GM12878 (cell line): ENCODE measurements at regions of chr14 and their contacts with region 1.

Region 1: DNA sequence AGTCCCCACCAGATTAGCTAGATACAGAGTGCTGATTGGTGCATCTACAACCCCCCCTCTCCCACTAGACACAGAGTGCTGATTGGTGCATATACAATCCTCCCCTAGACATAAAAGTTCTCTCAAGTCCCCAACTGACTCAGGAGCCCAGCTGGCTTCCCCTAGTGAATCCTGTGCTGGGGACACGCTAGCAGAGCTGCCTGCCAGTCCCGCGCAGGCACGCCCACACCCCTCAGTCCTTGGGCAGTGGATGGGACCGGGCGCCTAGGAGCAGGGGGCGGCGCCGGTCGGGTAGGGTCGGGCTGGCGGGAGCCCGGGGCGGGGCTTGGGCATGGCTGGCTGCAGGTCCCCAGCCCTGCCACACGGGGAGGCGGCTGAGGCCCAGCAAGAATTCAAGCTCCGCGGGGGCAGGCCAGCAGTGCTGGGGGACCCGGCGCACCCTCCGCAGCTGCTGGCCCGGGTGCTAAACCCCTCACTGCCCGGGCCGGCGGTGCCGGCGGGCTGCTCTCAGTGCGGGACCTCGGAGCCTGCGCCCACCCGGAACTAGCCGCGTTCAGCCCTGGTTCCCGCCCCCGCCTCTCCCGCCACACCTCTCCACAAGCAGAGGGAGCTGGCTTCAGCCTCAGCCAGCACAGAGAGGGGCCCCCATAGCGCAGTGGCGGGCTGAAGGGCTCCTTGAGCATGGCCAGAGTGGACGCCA is 64.3 kb upstream of the DDHD1 start:
- DNase-seq: peak; percentile 28
- ATAC-seq: peak; percentile 99
- H3K4me3 ChIP-seq: peak overlapping the region; percentile 51
- H3K27ac ChIP-seq: peak overlapping the region; percentile 15; the same call in 1 of the 2 replicates
- H3K4me1 ChIP-seq: peaks cover 3% of the 10 kb centered on the region; the same call in 1 of the 2 replicates
- H3K27me3 ChIP-seq: no peaks in the 10 kb centered on the region
- CTCF ChIP-seq: peak; percentile 40 to 66 (median 45); a peak in 5 of 6 replicates
- EP300 ChIP-seq: no peak
- POLR2A ChIP-seq: peak; percentile 72
- RAD21 ChIP-seq: no peak

Region 2: GRCh38 chr14:53042480-53042879 is 175.0 kb before region 1 on chr14:
- CTCF ChIA-PET with region 1: no interaction called
- POLR2A ChIA-PET with region 1: no interaction called
- RAD21 ChIA-PET with region 1: no interaction called
- SMC1A ChIA-PET with region 1: no interaction called
- in situ Hi-C with region 1: no loop called
- intact Hi-C with region 1: no loop called
- DNase-seq: no peak
- ATAC-seq: no peak
- H3K4me3 ChIP-seq: no peak overlapping the region
- H3K27ac ChIP-seq: no peak overlapping the region
- H3K4me1 ChIP-seq: no peaks in the 10 kb centered on the region
- H3K27me3 ChIP-seq: no peaks in the 10 kb centered on the region
- CTCF ChIP-seq: no peak
- EP300 ChIP-seq: no peak
- POLR2A ChIP-seq: no peak
- RAD21 ChIP-seq: no peak

Region 3: GRCh38 chr14:53190938-53191337 is 26.5 kb before region 1 on chr14:
- CTCF ChIA-PET with region 1: no interaction called
- POLR2A ChIA-PET with region 1: interaction called, 4 read pairs
- RAD21 ChIA-PET with region 1: interaction called, 10 read pairs
- SMC1A ChIA-PET with region 1: interaction called, 4 read pairs
- in situ Hi-C with region 1: no loop called
- intact Hi-C with region 1: no loop called
- DNase-seq: no peak
- ATAC-seq: peak; percentile 71
- H3K4me3 ChIP-seq: no peak overlapping the region
- H3K27ac ChIP-seq: no peak overlapping the region
- H3K4me1 ChIP-seq: no peaks in the 10 kb centered on the region
- H3K27me3 ChIP-seq: no peaks in the 10 kb centered on the region
- CTCF ChIP-seq: no peak
- EP300 ChIP-seq: no peak
- POLR2A ChIP-seq: no peak
- RAD21 ChIP-seq: no peak

Region 4: GRCh38 chr14:53316499-53316898 is 99.1 kb after region 1 on chr14:
- CTCF ChIA-PET with region 1: no interaction called
- POLR2A ChIA-PET with region 1: no interaction called
- RAD21 ChIA-PET with region 1: no interaction called
- SMC1A ChIA-PET with region 1: no interaction called
- in situ Hi-C with region 1: no loop called
- intact Hi-C with region 1: no loop called
- DNase-seq: no peak
- ATAC-seq: no peak
- H3K4me3 ChIP-seq: no peak overlapping the region
- H3K27ac ChIP-seq: no peak overlapping the region
- H3K4me1 ChIP-seq: no peaks in the 10 kb centered on the region
- H3K27me3 ChIP-seq: no peaks in the 10 kb centered on the region
- CTCF ChIP-seq: no peak
- EP300 ChIP-seq: no peak
- POLR2A ChIP-seq: no peak
- RAD21 ChIP-seq: no peak

Region 5: DNA sequence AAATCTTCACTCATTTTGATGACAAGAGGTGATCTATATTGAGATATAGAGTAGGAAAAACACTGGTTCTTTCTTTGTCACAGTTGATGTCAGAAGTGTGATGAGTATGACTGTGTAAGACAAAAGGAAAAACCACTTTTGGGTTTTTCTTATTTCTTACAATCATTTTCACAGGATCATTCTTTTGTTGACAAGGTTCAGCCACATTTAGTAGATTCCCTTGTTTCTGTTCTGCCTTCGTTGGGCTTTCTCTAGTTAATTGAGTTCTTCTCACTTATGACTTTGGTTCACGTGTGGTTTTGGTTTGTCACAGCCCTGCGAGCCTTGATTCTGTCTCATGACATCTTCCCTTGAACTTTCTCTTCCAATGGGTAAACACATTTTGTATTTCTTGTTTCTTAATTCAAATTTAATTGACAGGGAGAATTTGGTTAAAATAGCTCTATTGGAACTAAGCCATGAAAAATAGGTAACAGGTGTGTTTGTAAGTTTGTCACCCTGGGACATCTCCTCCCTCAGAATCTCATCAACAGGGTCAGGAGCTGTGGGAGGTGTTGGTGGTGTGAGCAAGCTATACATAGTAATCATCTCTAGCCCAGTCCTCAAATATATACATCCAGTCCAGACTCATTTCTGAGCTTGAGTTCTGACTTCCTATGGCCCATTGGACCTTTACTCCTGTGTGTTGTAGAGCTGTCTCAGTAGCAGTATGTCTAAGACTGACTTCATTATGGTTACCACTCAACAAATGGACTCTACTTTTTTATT is 483.8 kb after region 1 on chr14:
- CTCF ChIA-PET with region 1: no interaction called
- POLR2A ChIA-PET with region 1: no interaction called
- RAD21 ChIA-PET with region 1: no interaction called
- SMC1A ChIA-PET with region 1: no interaction called
- in situ Hi-C with region 1: no loop called
- intact Hi-C with region 1: no loop called
- DNase-seq: peak; percentile 40
- ATAC-seq: peak; percentile 85
- H3K4me3 ChIP-seq: no peak overlapping the region
- H3K27ac ChIP-seq: peak overlapping the region; percentile 37
- H3K4me1 ChIP-seq: peaks cover 13% of the 10 kb centered on the region
- H3K27me3 ChIP-seq: no peaks in the 10 kb centered on the region
- CTCF ChIP-seq: no peak
- EP300 ChIP-seq: peak; percentile 77 to 84; a peak in 2 of 4 replicates
- POLR2A ChIP-seq: no peak
- RAD21 ChIP-seq: 0 out of 2 replicates have a peak, but pooled peaks have one; percentile 4